ENCODE measurements at regions of chr10 and their contacts with region 1.

Region 1: DNA sequence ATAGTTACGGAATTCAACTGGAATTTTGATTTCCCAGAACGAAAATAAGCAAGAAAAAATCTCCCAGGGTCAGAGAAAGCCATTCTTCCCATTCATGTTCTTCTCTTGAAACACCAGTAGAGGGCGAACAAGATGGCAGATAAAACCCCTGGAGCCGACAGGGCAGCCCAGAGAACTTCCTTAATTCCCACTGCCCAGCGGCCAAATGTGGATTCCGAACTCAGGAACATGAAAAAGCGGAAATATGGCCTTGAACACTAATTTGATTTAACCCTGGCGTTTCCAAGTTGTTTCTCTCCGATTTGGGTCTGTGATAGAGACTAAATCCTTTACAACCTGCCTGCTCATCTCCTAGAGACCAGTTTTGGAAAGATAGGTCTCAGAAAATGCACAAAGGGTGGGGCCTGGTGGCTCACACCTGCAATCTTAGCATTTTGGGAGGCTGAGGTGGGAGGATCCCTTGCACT is 100.7 kb upstream of the WAC start:
- DNase-seq: peak; percentile 89

Region 2: GRCh38 chr10:28393966-28394568 is 38.2 kb before region 1 on chr10:
- in situ Hi-C with region 1: no loop called
- DNase-seq: peak; percentile 67

Region 3: DNA sequence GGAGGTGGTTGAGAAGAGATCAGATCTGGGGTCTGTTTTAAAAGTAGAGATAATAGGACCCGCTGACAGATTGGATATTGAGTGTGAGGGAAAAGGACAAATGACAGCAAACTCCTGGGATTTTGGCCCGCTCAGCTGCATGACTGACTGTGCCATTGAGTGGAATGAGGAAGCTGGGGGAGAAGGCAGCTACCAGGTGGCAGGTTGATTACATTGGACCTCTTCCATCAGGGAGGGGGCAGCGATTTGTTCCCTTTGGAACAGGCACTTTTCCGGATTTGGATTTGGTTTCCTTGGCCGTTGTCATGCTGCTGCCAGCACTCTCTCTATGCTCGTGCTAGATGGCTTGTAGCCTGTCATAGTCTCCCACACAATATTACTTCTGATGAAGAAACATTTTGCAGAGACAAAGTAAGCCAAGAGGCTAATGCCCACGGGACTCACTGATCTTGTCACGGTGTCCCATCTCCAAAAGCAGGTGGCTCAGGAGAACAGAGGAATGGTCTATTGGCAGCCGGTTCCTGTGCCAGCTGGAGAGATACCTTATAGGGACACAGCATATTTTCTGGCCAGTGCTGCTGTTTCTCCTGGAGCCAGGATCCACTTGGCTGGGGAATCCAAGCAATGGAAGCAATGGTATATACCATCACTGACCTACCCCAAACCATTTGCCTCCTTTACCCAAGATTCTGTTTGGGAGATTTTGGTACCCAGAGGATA is 31.6 kb after region 1 on chr10:
- in situ Hi-C with region 1: no loop called
- DNase-seq: peak; percentile 99

Region 4: GRCh38 chr10:28587970-28588290 is 155.7 kb after region 1 on chr10:
- in situ Hi-C with region 1: loop called (anchors 25 kb)
- DNase-seq: peak; percentile 72

Measured in G401 (cell line).